Naive thymus-derived CD4-positive, alpha-beta T cell (primary cell): ENCODE measurements at regions of chr11 and their contacts with region 1.

Region 1: DNA sequence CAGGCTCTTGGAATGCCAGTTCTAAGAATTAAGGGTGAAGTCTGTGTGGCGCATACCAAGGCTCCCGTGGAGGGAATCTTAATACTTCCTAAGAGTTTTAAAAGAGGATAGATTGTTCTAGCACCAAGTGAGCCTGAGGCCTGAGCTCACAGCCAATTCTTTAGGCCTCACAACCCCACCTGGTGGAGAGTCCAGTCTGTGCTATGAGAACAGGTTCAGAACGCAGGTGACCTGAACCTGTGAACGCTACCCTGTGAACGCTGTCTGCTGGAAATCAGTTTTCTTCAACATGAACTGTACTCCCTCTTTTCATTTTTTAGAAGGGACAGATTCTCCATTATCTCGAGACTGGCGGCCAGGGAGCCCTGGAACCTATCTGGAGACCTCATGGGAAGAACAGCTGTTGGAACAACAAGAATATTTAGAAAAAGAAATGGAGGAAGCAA is 43.2 kb upstream of the DLAT start:
- DNase-seq: peak; percentile 7 to 60 (median 44)
- ATAC-seq: peak; percentile 84
- H3K4me3 ChIP-seq: no peak overlapping the region
- H3K4me3 Mint-ChIP-seq: no peak overlapping the region
- H3K27ac ChIP-seq: no peak overlapping the region
- H3K27ac Mint-ChIP-seq: peak overlapping the region in 1 of 9 donors; percentile 22
- H3K4me1 ChIP-seq: peaks cover 0 to 3% of the 10 kb centered on the region in 2 donors
- H3K4me1 Mint-ChIP-seq: peaks cover 0 to 10% (median 7%) of the 10 kb centered on the region in 7 donors
- H3K27me3 ChIP-seq: peaks cover 0 to 3% of the 10 kb centered on the region in 2 donors
- H3K27me3 Mint-ChIP-seq: peaks cover 7 to 29% (median 27%) of the 10 kb centered on the region in 5 donors

Region 2: GRCh38 chr11:111938687-111939160 is 43.3 kb before region 1 on chr11:
- CTCF ChIA-PET with region 1: interaction called, 114 read pairs
- POLR2A ChIA-PET with region 1: interaction called, 8 read pairs
- intact Hi-C with region 1: no loop called
- DNase-seq: peak in 6 of 9 donors; percentile 18 to 38 (median 27)
- ATAC-seq: peak; percentile 73
- H3K4me3 ChIP-seq: no peak overlapping the region
- H3K4me3 Mint-ChIP-seq: peak overlapping the region; percentile 59 to 95 (median 78)
- H3K27ac ChIP-seq: peak overlapping the region; percentile 49
- H3K27ac Mint-ChIP-seq: peak overlapping the region; percentile 67 to 96 (median 84)
- H3K4me1 ChIP-seq: peaks cover 4 to 29% of the 10 kb centered on the region in 2 donors
- H3K4me1 Mint-ChIP-seq: peaks cover 16 to 48% (median 32%) of the 10 kb centered on the region in 7 donors
- H3K27me3 ChIP-seq: no peaks in the 10 kb centered on the region
- H3K27me3 Mint-ChIP-seq: no peaks in the 10 kb centered on the region